ENCODE measurements at regions of chr7 and their contacts with region 1.

Region 1: DNA sequence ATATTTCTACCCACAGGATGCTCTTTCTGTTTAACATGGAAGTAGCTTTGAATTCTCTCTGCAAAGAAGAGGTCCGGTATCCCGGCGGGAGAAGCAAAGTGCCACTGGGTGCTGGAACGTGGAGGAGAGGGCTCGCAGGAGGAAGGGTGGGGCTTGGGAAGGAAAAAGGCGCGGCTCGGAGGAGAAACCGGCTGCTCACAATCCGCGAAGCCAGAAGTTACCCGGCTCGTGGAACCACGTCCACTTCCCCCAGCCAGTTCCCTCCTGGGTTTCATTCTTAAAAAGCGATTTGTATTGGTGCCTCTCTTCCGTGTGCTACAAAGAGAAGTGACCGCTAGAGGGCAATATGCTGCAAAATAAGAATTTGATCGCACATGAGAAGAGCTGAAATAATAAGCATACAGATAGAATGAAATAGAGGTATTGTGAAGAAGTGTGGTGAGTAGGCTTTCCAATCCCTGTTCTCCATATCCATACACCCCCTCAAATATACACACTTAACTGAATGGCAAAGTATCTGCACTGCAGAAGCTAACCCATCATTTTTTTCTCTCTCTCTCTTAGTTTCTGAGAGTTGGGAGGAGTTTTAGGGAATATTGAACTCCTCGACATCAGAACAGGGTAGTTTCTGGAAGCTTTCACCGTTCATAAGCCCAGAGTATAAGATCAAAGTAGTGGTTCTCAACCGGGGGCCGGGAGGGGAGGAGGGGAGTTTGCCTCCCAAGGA is 31.1 kb downstream of the TRIL start:
- DNase-seq: peak; percentile 68
- ATAC-seq: peak; percentile 84
- H3K4me3 Mint-ChIP-seq: peak overlapping the region; percentile 74
- H3K27ac Mint-ChIP-seq: no peak overlapping the region
- H3K4me1 Mint-ChIP-seq: peaks cover 41% of the 10 kb centered on the region
- H3K27me3 Mint-ChIP-seq: peaks cover 8% of the 10 kb centered on the region
- CTCF ChIP-seq: peak; percentile 75

Region 2: DNA sequence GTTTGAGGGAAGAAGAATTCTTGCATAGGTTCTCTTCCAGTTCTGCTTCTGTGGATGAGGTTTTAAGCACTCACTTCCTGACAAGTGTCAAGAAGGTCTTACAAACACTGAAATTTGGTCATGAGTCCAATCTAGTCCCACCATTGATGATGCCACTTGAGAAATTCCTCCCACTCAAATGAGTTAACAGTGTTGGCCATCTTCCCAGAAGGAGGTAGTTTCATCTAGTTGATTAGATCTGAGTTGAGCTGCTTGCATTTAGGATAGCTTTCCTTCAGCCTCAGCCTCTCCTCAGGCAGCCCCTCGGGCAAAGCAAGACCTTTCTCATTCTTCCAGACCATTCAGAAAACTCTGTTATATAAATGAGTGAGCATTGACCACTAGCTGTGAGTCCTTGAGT is 158.4 kb before region 1 on chr7:
- CTCF ChIA-PET with region 1: no interaction called
- POLR2A ChIA-PET with region 1: no interaction called
- DNase-seq: no peak
- ATAC-seq: peak; percentile 78
- H3K4me3 Mint-ChIP-seq: no peak overlapping the region
- H3K27ac Mint-ChIP-seq: no peak overlapping the region
- H3K4me1 Mint-ChIP-seq: peaks cover 7% of the 10 kb centered on the region
- H3K27me3 Mint-ChIP-seq: peaks cover 46% of the 10 kb centered on the region
- CTCF ChIP-seq: no peak

Region 3: GRCh38 chr7:29091715-29092114 is 164.7 kb after region 1 on chr7:
- CTCF ChIA-PET with region 1: interaction called, 12 read pairs
- POLR2A ChIA-PET with region 1: no interaction called
- DNase-seq: no peak
- ATAC-seq: 0 out of 2 replicates have a peak, but pooled peaks have one; percentile 46
- H3K4me3 Mint-ChIP-seq: no peak overlapping the region
- H3K27ac Mint-ChIP-seq: no peak overlapping the region
- H3K4me1 Mint-ChIP-seq: peaks cover 23% of the 10 kb centered on the region
- H3K27me3 Mint-ChIP-seq: no peaks in the 10 kb centered on the region; the same call in 1 of the 2 replicates
- CTCF ChIP-seq: no peak

Region 4: GRCh38 chr7:29105752-29106668 is 179.0 kb after region 1 on chr7:
- CTCF ChIA-PET with region 1: interaction called, 246 read pairs
- POLR2A ChIA-PET with region 1: no interaction called
- DNase-seq: peak; percentile 34
- ATAC-seq: peak; percentile 86
- H3K4me3 Mint-ChIP-seq: no peak overlapping the region
- H3K27ac Mint-ChIP-seq: no peak overlapping the region
- H3K4me1 Mint-ChIP-seq: no peaks in the 10 kb centered on the region; the same call in 1 of the 2 replicates
- H3K27me3 Mint-ChIP-seq: no peaks in the 10 kb centered on the region
- CTCF ChIP-seq: peak; percentile 47

Region 5: GRCh38 chr7:29123626-29124190 is 196.7 kb after region 1 on chr7:
- CTCF ChIA-PET with region 1: interaction called, 17 read pairs
- POLR2A ChIA-PET with region 1: no interaction called
- DNase-seq: no peak
- ATAC-seq: no peak
- H3K4me3 Mint-ChIP-seq: no peak overlapping the region
- H3K27ac Mint-ChIP-seq: no peak overlapping the region
- H3K4me1 Mint-ChIP-seq: peaks cover 43% of the 10 kb centered on the region
- H3K27me3 Mint-ChIP-seq: no peaks in the 10 kb centered on the region; the same call in 1 of the 2 replicates
- CTCF ChIP-seq: no peak

Region 6: DNA sequence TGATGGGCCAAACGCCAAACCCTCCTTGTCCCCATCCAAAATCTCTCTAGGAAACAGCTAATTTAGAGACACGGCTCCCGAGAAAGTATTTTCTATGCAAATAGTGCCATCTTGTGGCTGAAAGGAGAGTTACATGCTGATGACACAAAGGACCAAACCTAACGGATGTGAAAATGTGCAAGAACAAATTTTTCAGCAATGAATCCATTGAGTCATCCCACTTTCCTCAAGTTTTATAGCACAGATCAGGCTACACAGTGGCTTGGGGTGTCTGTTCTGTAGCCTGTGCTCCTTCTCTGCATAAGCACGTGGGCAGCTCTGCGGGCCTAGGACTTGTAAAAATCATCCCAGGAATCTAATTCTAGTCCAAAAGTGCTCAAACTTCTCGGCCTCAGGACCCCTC is 481.8 kb after region 1 on chr7:
- CTCF ChIA-PET with region 1: interaction called, 44 read pairs
- POLR2A ChIA-PET with region 1: no interaction called
- DNase-seq: peak; percentile 34
- ATAC-seq: peak; percentile 60
- H3K4me3 Mint-ChIP-seq: peak overlapping the region; percentile 33; the same call in 1 of the 2 replicates
- H3K27ac Mint-ChIP-seq: no peak overlapping the region
- H3K4me1 Mint-ChIP-seq: peaks cover 19% of the 10 kb centered on the region
- H3K27me3 Mint-ChIP-seq: no peaks in the 10 kb centered on the region
- CTCF ChIP-seq: peak; percentile 84

Measured in WTC11 (cell line).